GM10248 (cell line): ENCODE measurements at regions of chr15 and their contacts with region 1.

Region 1: DNA sequence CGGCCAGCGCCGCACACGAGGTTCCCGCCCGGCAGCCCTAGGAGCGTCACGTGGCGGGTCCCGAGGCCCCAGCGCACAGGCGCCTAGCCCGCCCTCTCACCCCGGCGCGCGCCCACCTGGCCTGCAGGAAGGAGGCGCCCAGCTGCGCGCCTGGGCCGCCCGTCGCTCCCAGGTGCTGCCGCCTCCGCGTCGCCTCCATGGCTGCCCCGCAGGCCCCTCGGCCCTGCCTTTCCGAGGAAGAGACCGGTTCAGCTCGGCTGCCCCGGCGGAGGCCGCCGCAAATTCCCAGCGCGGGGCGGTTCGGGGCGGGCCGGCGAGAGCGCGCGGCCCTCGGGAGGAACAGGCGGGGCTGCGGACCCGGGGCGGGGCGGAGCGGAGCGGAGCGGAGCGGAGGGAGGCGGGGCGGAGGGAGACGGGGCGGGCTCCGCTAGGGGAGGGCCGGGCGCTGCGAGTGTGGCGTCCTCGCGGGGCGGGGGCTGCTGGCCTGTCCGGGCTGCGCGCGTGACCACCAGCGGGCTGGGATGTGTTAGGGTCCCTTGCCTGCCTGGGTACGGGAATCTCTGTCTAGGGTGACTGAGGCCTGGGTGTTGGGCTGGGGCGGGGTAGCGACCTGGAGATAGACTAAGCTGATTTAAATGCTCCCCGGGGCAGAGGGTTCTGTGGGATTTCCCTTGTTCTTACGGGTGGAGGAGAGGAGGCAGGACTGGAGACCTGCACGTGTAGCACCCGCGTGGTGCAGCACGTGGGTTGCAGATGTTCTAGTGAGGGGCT is at the start of gene CLN6:
- DNase-seq: peak; percentile 95
- CTCF ChIP-seq: no peak

Region 2: DNA sequence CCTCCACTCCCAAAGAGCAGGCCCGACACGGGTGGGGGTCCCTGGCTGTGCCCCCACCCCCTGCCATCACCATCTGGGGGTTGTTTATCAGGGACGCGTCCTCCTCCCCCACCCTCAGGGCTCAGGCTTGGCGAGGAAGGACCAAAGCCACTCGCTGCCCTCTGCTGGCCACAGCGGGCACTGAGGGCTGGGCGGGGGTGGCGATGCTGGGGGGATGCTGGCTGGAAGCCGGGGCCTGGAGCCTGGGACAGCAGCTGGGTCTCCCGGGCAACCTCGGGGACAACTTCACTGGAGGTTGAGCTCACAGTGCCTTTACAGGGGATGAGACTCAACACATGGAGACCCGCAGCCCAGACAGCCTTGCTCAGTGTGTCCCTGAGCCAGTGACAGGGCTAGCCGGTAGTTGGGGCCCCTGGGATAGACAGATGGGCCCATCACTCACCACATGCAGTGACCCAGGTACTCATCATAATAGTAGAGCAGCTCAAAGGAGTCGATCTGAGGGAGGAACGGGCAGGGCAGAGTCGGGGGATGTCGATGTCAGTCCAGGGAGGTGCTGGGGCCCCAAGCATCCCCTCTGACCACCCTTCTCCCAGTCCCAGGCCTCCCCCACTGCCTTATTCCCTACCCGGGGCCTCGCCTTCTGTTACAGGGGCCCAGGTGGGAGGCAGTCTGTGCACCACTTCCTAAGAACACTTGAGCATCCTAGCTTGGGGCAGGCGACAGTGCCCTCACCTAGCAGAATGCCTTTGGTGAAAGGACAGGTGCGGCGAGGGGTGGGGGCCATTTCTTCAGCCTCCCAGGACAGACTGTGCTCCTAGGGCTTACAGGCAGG is 18.5 kb before region 1 on chr15:
- CTCF ChIA-PET with region 1: interaction called, 29 read pairs
- POLR2A ChIA-PET with region 1: no interaction called
- DNase-seq: peak; percentile 73
- CTCF ChIP-seq: peak; percentile 90

Region 3: GRCh38 chr15:68418611-68419161 is 189.1 kb after region 1 on chr15:
- CTCF ChIA-PET with region 1: no interaction called
- POLR2A ChIA-PET with region 1: no interaction called
- DNase-seq: no peak
- CTCF ChIP-seq: no peak